ENCODE measurements at regions of chr17 and their contacts with region 1.

Region 1: DNA sequence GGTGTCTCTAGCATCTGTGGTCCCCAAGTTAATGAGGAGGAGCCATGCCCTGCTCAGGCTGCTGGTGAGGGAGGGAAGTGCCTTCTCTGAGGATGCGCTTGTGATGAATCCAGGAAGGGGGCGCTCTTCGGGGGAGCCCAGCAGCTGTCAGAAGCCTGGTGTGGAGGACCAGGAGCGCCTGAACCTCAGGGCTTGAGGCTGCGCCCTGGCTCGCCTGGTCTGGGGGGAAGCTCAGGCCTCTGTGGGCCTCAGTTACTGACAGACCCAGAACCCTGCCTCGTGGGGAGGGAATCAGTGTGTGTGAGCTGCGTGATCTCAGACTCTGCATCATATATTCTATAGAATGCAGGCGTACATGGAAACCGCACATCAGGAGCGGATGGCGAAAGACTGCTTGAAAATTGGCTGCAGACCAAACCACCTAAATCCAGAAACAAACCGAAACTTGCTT is 126.1 kb downstream of the SEC14L1 start:
- DNase-seq: peak; percentile 72
- ATAC-seq: peak; percentile 93
- H3K4me3 Mint-ChIP-seq: no peak overlapping the region
- H3K27ac Mint-ChIP-seq: no peak overlapping the region
- H3K4me1 Mint-ChIP-seq: peaks cover 16% of the 10 kb centered on the region
- H3K27me3 Mint-ChIP-seq: no peaks in the 10 kb centered on the region; the same call in 1 of the 2 replicates
- CTCF ChIP-seq: 0 out of 2 replicates have a peak, but pooled peaks have one; percentile 28

Region 2: GRCh38 chr17:77280980-77281903 is 14.3 kb after region 1 on chr17:
- CTCF ChIA-PET with region 1: interaction called, 10 read pairs
- POLR2A ChIA-PET with region 1: no interaction called
- DNase-seq: peak; percentile 69
- ATAC-seq: peak; percentile 72
- H3K4me3 Mint-ChIP-seq: peak overlapping the region; percentile 88
- H3K27ac Mint-ChIP-seq: no peak overlapping the region
- H3K4me1 Mint-ChIP-seq: peaks cover 41% of the 10 kb centered on the region
- H3K27me3 Mint-ChIP-seq: peaks cover 26% of the 10 kb centered on the region
- CTCF ChIP-seq: no peak

Region 3: DNA sequence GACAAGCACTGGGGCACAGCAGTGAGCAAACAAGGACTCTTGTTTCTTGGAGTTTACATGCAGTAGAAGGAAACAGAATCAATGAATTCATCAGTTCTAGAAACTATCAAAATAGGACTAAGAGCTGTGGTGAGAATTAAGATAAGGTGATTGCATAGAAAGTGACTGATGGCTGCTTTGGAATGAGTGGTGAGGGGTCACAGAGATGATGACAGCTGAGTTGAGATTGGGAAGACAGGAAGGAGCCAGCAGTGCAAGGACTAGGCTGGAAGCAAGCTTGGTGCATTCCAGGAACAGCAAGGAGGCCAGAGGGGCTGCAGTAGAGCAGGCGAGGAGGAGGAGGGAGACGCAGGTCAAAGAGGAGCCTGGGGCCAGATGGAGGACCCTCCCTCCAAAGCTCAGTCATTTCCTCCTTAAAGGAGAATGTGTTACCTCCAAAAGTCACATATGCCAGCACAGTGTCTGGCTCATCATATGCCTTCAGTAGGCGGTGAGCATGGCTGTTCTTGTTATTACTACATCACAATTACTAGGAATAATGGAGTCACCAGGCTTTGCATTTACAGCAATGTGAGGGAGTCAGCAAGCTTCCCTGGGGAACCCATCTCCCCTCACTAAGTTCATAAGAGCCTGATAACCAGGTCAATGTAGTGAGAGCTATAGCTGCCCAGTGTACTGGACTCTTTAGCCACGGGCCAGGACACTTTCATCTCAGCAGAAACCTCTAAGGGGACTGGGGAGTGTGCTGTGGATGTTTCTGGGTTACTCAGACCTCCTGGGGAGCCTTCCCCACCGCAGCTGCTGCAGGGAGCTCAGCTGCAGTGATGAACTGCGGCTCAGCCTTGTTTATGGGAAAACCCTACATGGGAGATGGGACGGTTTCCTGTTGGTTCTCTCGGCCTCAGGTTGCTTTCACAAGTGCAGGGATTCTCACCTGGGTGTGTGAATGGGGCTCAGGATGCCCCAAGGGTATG is 31.1 kb after region 1 on chr17:
- CTCF ChIA-PET with region 1: no interaction called
- POLR2A ChIA-PET with region 1: no interaction called
- DNase-seq: no peak
- ATAC-seq: no peak
- H3K4me3 Mint-ChIP-seq: no peak overlapping the region
- H3K27ac Mint-ChIP-seq: no peak overlapping the region
- H3K4me1 Mint-ChIP-seq: peaks cover 7% of the 10 kb centered on the region; the same call in 1 of the 2 replicates
- H3K27me3 Mint-ChIP-seq: no peaks in the 10 kb centered on the region
- CTCF ChIP-seq: no peak

Region 4: GRCh38 chr17:77319211-77320043 is 52.5 kb after region 1 on chr17:
- CTCF ChIA-PET with region 1: no interaction called
- POLR2A ChIA-PET with region 1: no interaction called
- DNase-seq: peak; percentile 30
- ATAC-seq: no peak
- H3K4me3 Mint-ChIP-seq: no peak overlapping the region
- H3K27ac Mint-ChIP-seq: peak overlapping the region; percentile 77
- H3K4me1 Mint-ChIP-seq: peaks cover 60% of the 10 kb centered on the region
- H3K27me3 Mint-ChIP-seq: no peaks in the 10 kb centered on the region
- CTCF ChIP-seq: no peak

Measured in WTC11 (cell line).